GM10248 (cell line): ENCODE measurements at regions of chr10 and their contacts with region 1.

Region 1: GRCh38 chr10:92110039-92110794 is 180.7 kb downstream of the CPEB3 start:
- DNase-seq: no peak
- CTCF ChIP-seq: no peak

Region 2: DNA sequence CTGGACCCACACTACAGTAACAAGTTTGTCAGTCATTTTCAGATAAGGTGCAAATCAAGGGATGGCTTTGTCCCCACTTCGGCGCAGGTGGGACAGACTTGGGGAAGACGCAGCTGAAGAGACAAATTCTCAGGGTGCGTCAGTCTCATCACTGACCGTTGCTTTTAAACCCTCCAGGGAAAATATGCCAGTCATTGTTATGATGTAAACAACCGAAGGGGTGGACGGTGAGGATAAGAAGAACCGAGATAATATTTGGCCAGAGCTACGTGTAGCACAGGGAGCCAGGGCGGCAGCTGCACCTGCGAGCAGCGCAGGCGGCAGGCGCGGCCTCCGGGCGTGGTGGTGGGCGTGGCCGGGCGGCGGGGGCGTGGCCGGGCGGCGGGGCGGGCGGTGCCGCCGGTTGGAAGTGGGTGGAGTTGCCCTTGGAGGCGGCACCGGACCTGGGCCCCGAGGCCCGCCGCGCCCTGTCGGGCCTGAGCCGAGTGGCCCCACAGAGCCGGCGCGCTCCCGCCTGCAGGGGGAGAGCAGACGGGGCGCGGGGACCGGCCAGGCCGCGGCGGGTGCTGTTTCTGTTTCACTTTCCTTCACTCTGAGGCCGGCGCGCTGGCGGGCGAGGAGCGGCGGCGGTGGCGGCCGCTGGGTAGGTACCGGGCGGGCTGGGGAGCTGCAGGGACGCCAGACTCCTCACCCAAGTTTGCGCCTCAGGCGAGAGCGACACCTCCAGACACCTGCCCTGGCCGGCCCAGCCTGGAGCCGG is 889.8 kb before region 1 on chr10 and contains the start of gene PCGF5:
- CTCF ChIA-PET with region 1: no interaction called
- POLR2A ChIA-PET with region 1: no interaction called
- DNase-seq: peak; percentile 96
- CTCF ChIP-seq: peak; percentile 34

Region 3: GRCh38 chr10:92124616-92125143 is 14.5 kb after region 1 on chr10:
- CTCF ChIA-PET with region 1: interaction called, 10 read pairs
- POLR2A ChIA-PET with region 1: no interaction called
- DNase-seq: no peak
- CTCF ChIP-seq: no peak